ENCODE measurements at regions of chr2 and their contacts with region 1.

Region 1: DNA sequence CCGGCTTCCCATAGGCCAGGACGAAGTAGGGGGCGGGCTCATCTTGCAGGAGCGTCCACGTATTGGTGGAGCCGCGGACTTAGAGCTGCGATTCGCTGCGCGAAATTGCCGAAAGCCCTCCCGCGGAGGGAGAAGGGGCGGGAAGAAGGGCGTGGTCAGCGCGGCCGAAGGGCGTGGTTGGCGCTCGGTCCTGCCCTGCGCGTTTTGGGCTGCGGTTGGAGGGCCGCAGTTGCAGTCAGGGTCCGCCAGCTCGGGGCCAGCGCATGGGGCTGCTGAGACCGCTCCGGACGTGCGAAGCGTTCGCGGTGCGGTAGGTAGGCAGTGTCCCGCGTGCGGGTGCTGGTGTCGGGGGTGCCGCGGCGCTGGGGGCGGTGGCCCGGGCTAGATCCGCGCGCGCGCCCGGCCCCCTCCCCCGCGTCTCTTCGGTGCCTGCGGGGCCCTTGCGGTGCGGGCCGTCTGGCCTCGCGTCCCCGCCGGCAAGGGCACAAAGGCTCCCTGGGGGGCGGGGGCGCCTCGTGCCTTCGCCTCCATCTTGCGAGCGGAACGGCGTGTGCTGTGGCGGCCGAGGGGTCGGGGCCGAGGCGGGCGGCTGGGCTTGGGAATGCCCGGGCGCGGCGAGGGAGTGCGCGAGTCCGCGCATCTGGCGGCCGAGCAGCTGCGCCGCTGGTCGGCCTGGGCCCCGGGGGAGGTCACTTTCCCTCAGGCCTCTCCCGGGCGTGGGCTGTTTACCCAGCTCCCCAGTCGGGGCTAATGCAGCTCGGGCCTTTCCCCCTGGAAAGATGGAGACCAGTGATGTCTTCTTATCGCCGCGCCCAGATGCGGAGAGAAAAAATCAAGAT is at the start of gene CEP68:
- DNase-seq: peak; percentile 99
- ATAC-seq: peak; percentile 95
- H3K4me3 Mint-ChIP-seq: peak within 1 kb of the TSS; percentile 86
- H3K27ac Mint-ChIP-seq: peak within 1 kb of the TSS; percentile 84
- H3K4me1 Mint-ChIP-seq: peaks cover 57% of the 10 kb centered on the region
- H3K27me3 Mint-ChIP-seq: no peaks in the 10 kb centered on the region
- total RNA-seq, gene CEP68: 5.9 to 9.2 TPM

Region 2: DNA sequence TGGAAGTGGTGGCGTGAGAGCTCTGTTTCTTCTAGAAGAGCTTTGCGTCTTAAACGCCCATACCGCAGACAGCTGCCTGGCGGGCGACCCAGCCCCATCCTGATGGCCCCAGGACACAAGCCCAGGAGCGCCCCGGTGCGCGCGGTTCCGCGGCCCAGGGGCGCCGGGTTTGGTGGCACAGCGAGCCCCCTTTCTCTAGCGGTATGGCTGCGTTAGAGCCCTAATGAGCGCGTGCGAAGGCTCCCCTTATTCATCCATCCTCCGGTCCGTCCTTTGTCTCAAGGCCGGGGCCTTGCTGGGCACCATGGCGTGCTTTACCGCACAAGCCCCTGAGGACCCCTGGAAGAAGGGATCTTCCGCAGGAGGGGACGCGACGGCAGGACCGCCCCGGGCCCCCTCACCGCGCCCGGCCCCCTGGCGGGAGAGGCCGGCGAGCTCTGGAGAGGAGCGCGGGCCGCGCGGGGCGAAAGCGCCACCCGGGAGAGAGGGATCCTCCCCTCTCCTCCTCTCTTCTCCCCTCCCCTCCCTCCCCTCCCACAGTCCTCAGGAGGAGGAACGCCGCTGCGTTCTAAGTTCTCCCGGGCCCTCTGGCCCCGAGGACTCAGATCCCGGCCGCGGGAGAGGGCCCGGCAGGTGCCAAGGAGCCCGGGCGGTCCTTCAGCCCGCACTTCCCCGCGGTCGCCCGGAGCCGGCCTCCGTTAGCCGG is 67.9 kb before region 1 on chr2:
- CTCF ChIA-PET with region 1: interaction called, 11 read pairs
- DNase-seq: peak; percentile 91
- ATAC-seq: peak; percentile 45
- H3K4me3 Mint-ChIP-seq: peak overlapping the region; percentile 75
- H3K27ac Mint-ChIP-seq: peak overlapping the region; percentile 78
- H3K4me1 Mint-ChIP-seq: peaks cover 75% of the 10 kb centered on the region
- H3K27me3 Mint-ChIP-seq: peaks cover 3% of the 10 kb centered on the region

Region 3: DNA sequence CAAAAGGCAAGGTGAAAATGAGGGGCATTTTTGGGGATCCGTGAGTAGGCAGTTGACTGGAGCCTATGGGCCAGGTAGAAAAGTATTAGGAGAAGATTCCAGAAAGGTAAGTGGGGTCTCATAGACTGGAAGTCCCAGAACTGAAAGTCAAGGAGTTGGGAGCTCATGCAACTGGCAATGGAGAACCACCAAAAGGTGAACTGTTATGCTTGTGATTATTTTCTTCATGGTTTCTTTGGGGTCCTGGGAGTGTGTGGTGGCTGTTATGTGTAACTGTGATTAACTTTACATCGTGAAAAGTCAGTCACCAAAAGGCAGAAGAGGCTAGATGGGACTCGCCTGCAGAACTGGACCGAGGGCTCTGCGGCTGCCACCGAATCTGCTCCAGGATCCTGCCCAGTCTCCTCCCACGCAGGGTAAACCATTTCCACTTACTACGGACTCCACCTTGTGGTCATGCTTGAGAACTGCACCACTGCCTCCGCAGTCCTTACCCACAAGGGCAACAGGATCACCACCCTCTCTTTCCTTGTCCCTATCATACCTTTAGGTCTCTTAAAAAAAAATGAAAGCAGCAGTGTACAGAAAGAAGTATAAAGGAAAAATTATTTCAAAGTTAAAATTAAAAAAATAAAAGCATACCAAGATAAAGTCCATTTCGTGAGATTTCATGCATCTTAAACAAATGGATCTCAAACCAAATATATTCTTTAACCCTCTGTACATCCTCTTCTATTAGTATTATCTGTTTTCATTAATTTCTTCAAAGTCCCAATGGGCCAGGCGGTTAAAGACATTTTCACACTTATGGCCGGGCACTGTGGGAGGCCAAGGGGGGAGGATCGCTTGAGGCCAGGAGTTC is 15.8 kb before region 1 on chr2:
- CTCF ChIA-PET with region 1: interaction called, 10 read pairs
- DNase-seq: peak; percentile 87
- ATAC-seq: peak; percentile 99
- H3K4me3 Mint-ChIP-seq: no peak overlapping the region
- H3K27ac Mint-ChIP-seq: no peak overlapping the region
- H3K4me1 Mint-ChIP-seq: peaks cover 16% of the 10 kb centered on the region
- H3K27me3 Mint-ChIP-seq: no peaks in the 10 kb centered on the region

Region 4: DNA sequence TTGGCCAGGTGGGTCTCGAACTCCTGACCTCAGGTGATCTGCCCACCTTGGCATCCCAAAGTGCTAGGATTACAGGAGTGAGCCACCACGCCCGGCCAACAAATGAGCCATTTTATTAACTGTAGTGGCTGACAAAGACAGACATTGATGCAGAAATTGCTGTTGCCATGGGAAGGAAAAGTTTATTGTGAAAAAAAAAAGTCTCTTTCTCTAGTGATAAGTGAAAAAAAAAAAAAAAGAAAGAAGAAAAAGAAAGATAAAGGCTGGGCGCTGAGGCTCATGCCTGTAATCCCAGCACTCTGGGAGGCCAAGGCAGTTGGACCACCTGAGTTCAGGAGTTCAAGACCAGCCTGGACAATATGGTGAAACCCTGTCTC is 113.3 kb after region 1 on chr2:
- CTCF ChIA-PET with region 1: interaction called, 12 read pairs
- DNase-seq: no peak
- ATAC-seq: no peak
- H3K4me3 Mint-ChIP-seq: no peak overlapping the region
- H3K27ac Mint-ChIP-seq: no peak overlapping the region
- H3K4me1 Mint-ChIP-seq: no peaks in the 10 kb centered on the region
- H3K27me3 Mint-ChIP-seq: no peaks in the 10 kb centered on the region

Region 5: DNA sequence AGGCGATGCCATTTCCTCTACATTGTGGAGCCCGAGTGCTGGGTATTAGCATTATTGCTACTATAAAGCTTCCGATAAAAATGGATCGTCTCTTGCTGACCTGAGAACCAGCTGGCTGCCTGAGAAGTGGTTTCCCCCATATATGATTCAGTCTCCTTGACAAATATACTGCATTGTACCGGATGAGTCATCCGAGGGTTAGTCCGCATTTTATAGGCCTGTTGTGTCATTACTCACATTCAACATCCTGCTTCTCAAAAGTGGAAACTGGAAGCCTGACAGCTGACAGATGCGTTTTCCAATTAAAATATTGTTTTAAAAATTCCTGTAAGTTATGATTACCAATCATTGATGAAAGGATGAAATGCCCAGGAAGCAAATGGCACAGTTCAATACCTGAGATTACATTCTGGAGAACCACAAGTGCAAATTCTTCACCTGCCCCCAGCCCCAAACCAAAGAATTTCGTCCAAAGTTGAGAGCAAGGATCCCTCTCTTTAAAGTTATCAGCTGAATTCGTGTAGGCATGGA is 310.2 kb after region 1 on chr2:
- CTCF ChIA-PET with region 1: no interaction called
- DNase-seq: peak; percentile 59
- ATAC-seq: peak; percentile 94
- H3K4me3 Mint-ChIP-seq: no peak overlapping the region
- H3K27ac Mint-ChIP-seq: peak overlapping the region; percentile 17
- H3K4me1 Mint-ChIP-seq: peaks cover 18% of the 10 kb centered on the region
- H3K27me3 Mint-ChIP-seq: peaks cover 14% of the 10 kb centered on the region

Measured in activated CD8-positive, alpha-beta memory T cell treated with anti-CD3 and anti-CD28 coated beads, Interleukin-2, amount 10 ng/mL, durations not matched to agents 7 days and 5 days (primary cell).